ENCODE measurements at regions of chr2 and their contacts with region 1.

Region 1: GRCh38 chr2:71801969-71802368 is 345.7 kb downstream of the CYP26B1 start:
- DNase-seq: no peak
- H3K4me3 ChIP-seq: no peak overlapping the region
- H3K27ac ChIP-seq: peak overlapping the region in 4 of 8 donors; percentile 9 to 28 (median 24)
- H3K4me1 ChIP-seq: peaks cover 0 to 22% (median 10%) of the 10 kb centered on the region in 6 donors
- H3K27me3 ChIP-seq: peaks cover 0 to 11% (median 0%) of the 10 kb centered on the region in 7 donors
- CTCF ChIP-seq: peak; percentile 12 to 79 (median 61)
- POLR2A ChIP-seq: no peak

Region 2: GRCh38 chr2:71756280-71756906 is 45.6 kb before region 1 on chr2:
- intact Hi-C with region 1: no loop called
- DNase-seq: no peak
- H3K4me3 ChIP-seq: no peak overlapping the region
- H3K27ac ChIP-seq: no peak overlapping the region
- H3K4me1 ChIP-seq: no peaks in the 10 kb centered on the region
- H3K27me3 ChIP-seq: peaks cover 0 to 5% (median 0%) of the 10 kb centered on the region in 7 donors
- CTCF ChIP-seq: no peak
- POLR2A ChIP-seq: no peak

Region 3: GRCh38 chr2:71882949-71883472 is 81.0 kb after region 1 on chr2:
- intact Hi-C with region 1: no loop called
- DNase-seq: peak; percentile 88
- H3K4me3 ChIP-seq: no peak overlapping the region
- H3K27ac ChIP-seq: peak overlapping the region in 6 of 8 donors; percentile 27 to 70 (median 60)
- H3K4me1 ChIP-seq: peaks cover 15 to 51% (median 35%) of the 10 kb centered on the region in 6 donors
- H3K27me3 ChIP-seq: no peaks in the 10 kb centered on the region
- CTCF ChIP-seq: no peak
- POLR2A ChIP-seq: no peak

Region 4: DNA sequence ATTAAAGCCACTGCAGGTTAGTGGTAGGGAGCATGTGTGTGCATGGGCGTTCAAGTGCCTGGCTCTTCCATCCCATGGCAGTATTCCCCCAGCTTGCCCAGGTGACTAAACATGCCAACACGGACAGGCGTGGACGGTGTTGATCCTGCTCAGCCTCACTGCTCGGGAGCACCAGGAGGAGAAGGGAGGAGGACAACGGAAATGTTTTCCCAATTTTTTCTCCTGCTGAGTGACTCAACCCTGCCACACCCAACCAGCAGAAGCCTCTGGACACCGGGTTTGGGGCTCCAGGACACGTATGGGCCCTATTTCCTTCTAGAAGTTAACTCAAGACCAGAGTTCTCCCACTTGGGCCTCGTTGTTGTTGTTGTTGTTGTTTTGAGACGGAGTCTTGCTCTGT is 206.6 kb after region 1 on chr2:
- intact Hi-C with region 1: loop called (anchors 10 kb)
- DNase-seq: no peak
- H3K4me3 ChIP-seq: no peak overlapping the region
- H3K27ac ChIP-seq: no peak overlapping the region
- H3K4me1 ChIP-seq: no peaks in the 10 kb centered on the region
- H3K27me3 ChIP-seq: peaks cover 0 to 13% (median 0%) of the 10 kb centered on the region in 7 donors
- CTCF ChIP-seq: no peak
- POLR2A ChIP-seq: no peak

Region 5: GRCh38 chr2:72150157-72150865 is 348.3 kb after region 1 on chr2:
- intact Hi-C with region 1: loop called (anchors 5 kb)
- DNase-seq: peak; percentile 87
- H3K4me3 ChIP-seq: peak overlapping the region in 7 of 8 donors; percentile 9 to 67 (median 42)
- H3K27ac ChIP-seq: no peak overlapping the region
- H3K4me1 ChIP-seq: peaks cover 28 to 51% (median 43%) of the 10 kb centered on the region in 6 donors
- H3K27me3 ChIP-seq: peaks cover 11 to 90% (median 50%) of the 10 kb centered on the region in 7 donors
- CTCF ChIP-seq: peak; percentile 63 to 88 (median 81)
- POLR2A ChIP-seq: no peak